AG04449 (cell line): ENCODE measurements at regions of chr5 and their contacts with region 1.

Region 1: DNA sequence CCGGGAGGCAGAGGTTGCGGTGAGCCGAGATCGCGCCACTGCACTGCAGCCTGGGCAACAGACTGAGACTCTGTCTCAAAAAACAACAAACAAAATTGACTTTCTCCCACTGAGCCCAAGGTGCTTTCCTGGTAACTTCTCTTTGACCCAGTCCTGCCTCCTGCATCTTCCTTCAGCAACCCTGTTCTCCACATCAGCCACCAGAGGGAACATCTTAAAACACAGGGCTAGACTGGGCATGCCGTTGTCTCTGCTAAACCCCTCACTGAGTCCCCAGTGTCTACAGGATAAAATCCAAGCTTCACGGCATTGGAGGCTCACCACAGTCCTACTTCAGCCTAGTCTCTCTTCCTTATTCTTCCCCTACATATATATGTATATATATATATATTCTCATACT is 39.8 kb upstream of the KCNMB1 start:
- DNase-seq: no peak
- H3K4me3 ChIP-seq: no peak overlapping the region
- CTCF ChIP-seq: peak; percentile 40

Region 2: GRCh38 chr5:170623576-170624181 is 194.7 kb after region 1 on chr5:
- CTCF ChIA-PET with region 1: interaction called, 292 read pairs
- POLR2A ChIA-PET with region 1: no interaction called
- DNase-seq: peak; percentile 5
- H3K4me3 ChIP-seq: no peak overlapping the region
- CTCF ChIP-seq: peak; percentile 80

Region 3: GRCh38 chr5:170633235-170634081 is 204.4 kb after region 1 on chr5:
- CTCF ChIA-PET with region 1: interaction called, 292 read pairs
- POLR2A ChIA-PET with region 1: no interaction called
- DNase-seq: peak; percentile 37
- H3K4me3 ChIP-seq: peak overlapping the region; percentile 34
- CTCF ChIP-seq: no peak

Region 4: GRCh38 chr5:170701334-170701733 is 272.3 kb after region 1 on chr5:
- CTCF ChIA-PET with region 1: no interaction called
- POLR2A ChIA-PET with region 1: no interaction called
- DNase-seq: no peak
- H3K4me3 ChIP-seq: no peak overlapping the region
- CTCF ChIP-seq: no peak